Activated naive CD4-positive, alpha-beta T cell treated with anti-CD3 and anti-CD28 coated beads, Interleukin-2, amount 10 ng/mL, durations not matched to agents 7 days and 5 days (primary cell): ENCODE measurements at regions of chr16 and their contacts with region 1.

Region 1: DNA sequence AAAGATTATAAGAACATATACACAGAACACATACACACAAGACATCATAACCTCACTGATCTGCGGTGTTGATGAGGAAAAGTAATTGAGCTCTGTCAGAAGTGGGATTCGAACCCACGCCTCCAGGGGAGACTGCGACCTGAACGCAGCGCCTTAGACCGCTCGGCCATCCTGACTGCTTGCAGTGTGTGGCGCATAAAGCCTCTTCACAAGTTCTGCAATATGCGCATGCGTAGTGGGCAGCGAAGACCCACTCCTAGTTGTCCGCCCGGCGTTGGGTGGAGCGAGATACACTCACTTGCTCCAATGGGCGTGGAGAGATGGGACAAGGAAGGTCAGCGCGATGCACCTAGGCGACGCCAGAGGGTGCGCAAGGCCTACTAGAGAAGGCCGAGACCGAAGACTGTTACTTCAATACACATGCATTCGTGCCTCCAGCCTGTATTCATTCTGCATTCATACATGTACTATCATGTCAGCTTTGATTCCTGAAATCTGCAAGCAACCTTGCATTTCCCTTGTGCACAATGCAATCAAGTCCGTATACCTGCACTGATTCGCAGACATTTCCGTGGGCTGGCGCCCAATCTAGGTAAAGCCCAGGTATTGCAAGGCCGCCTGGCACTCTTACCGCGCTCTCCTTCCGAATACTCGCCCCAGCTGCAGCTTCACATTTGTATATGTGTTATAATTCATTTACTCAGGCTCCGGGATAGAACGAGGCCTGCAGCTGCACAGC is 16.1 kb upstream of the PLLP start:
- DNase-seq: peak; percentile 99
- H3K4me3 Mint-ChIP-seq: no peak overlapping the region
- H3K27ac Mint-ChIP-seq: no peak overlapping the region
- H3K4me1 Mint-ChIP-seq: peaks cover 26% of the 10 kb centered on the region
- H3K27me3 Mint-ChIP-seq: peaks cover 32% of the 10 kb centered on the region

Region 2: GRCh38 chr16:57277586-57277985 is 23.0 kb before region 1 on chr16:
- CTCF ChIA-PET with region 1: no interaction called
- DNase-seq: peak; percentile 82
- H3K4me3 Mint-ChIP-seq: no peak overlapping the region
- H3K27ac Mint-ChIP-seq: peak overlapping the region; percentile 46
- H3K4me1 Mint-ChIP-seq: peaks cover 48% of the 10 kb centered on the region
- H3K27me3 Mint-ChIP-seq: peaks cover 49% of the 10 kb centered on the region

Region 3: GRCh38 chr16:57314161-57314785 is 13.7 kb after region 1 on chr16:
- CTCF ChIA-PET with region 1: interaction called, 23 read pairs
- DNase-seq: no peak
- H3K4me3 Mint-ChIP-seq: no peak overlapping the region
- H3K27ac Mint-ChIP-seq: peak overlapping the region; percentile 76
- H3K4me1 Mint-ChIP-seq: peaks cover 16% of the 10 kb centered on the region
- H3K27me3 Mint-ChIP-seq: peaks cover 15% of the 10 kb centered on the region